ENCODE measurements at regions of chr1 and their contacts with region 1.

Region 1: DNA sequence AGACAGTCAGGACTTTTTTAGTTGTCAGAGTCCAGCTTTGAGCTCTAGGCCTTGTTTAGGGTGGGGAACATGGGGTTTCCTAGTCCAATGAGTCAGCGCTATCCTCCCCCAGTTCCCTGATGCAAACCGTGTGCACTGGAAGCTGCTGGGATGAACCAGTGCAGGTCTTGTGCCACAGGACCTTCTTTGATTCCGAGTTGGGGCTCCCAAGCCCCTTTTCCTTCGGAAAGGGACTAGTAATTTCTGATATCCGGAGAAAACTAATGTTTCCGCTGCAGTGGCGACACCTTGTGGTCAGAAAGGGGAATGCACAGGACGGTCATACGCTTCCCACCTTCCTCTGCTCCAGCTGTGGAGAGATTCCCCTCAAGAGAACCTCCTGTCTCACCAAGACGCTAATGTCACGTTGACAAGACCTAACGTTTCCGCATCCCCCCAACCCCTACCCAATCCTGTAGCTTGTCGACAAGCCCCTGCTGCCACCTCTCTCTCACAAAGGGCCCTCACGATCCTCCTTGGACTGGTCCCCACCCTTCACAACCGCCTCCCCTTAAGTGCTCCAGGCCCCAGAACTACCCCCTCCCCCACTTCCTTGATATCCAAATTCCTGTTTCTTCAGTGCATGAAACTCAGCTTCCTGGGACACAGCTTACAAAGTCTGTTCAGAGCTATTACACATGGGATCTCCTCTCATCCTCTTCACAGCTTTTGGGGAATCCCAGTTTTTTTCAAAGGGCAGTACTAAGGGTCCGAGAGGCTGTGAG is 30.9 kb downstream of the GPA33 start:
- DNase-seq: peak; percentile 88
- ATAC-seq: peak; percentile 73
- H3K4me3 Mint-ChIP-seq: peak overlapping the region; percentile 55
- H3K27ac Mint-ChIP-seq: no peak overlapping the region
- H3K4me1 Mint-ChIP-seq: peaks cover 17% of the 10 kb centered on the region
- H3K27me3 Mint-ChIP-seq: no peaks in the 10 kb centered on the region
- CTCF ChIP-seq: peak; percentile 98

Region 2: GRCh38 chr1:166875734-166876539 is 183.3 kb before region 1 on chr1 and contains the start of gene TADA1:
- CTCF ChIA-PET with region 1: interaction called, 23 read pairs
- POLR2A ChIA-PET with region 1: no interaction called
- DNase-seq: peak; percentile 99
- ATAC-seq: peak; percentile 92
- H3K4me3 Mint-ChIP-seq: peak within 1 kb of the TSS; percentile 94
- H3K27ac Mint-ChIP-seq: peak within 1 kb of the TSS; percentile 97
- H3K4me1 Mint-ChIP-seq: peaks cover 38% of the 10 kb centered on the region
- H3K27me3 Mint-ChIP-seq: peaks cover 2% of the 10 kb centered on the region; the same call in 1 of the 2 replicates
- CTCF ChIP-seq: no peak
- total RNA-seq, gene TADA1: 16.6 to 18.8 TPM (median 17.5 TPM) in 3 replicates

Region 3: GRCh38 chr1:166884040-166884642 is 175.1 kb before region 1 on chr1:
- CTCF ChIA-PET with region 1: interaction called, 104 read pairs
- POLR2A ChIA-PET with region 1: no interaction called
- DNase-seq: peak; percentile 91
- ATAC-seq: peak; percentile 99
- H3K4me3 Mint-ChIP-seq: peak overlapping the region; percentile 61
- H3K27ac Mint-ChIP-seq: no peak overlapping the region
- H3K4me1 Mint-ChIP-seq: peaks cover 8% of the 10 kb centered on the region
- H3K27me3 Mint-ChIP-seq: peaks cover 42% of the 10 kb centered on the region
- CTCF ChIP-seq: peak; percentile 70

Region 4: GRCh38 chr1:166920561-166921475 is 138.4 kb before region 1 on chr1:
- CTCF ChIA-PET with region 1: interaction called, 400 read pairs
- POLR2A ChIA-PET with region 1: no interaction called
- DNase-seq: peak; percentile 75
- ATAC-seq: peak; percentile 83
- H3K4me3 Mint-ChIP-seq: peak overlapping the region; percentile 71
- H3K27ac Mint-ChIP-seq: no peak overlapping the region
- H3K4me1 Mint-ChIP-seq: peaks cover 20% of the 10 kb centered on the region
- H3K27me3 Mint-ChIP-seq: peaks cover 59% of the 10 kb centered on the region
- CTCF ChIP-seq: no peak

Region 5: GRCh38 chr1:166999090-166999489 is 60.1 kb before region 1 on chr1:
- CTCF ChIA-PET with region 1: interaction called, 10 read pairs
- POLR2A ChIA-PET with region 1: no interaction called
- DNase-seq: no peak
- ATAC-seq: no peak
- H3K4me3 Mint-ChIP-seq: no peak overlapping the region
- H3K27ac Mint-ChIP-seq: no peak overlapping the region
- H3K4me1 Mint-ChIP-seq: peaks cover 9% of the 10 kb centered on the region
- H3K27me3 Mint-ChIP-seq: no peaks in the 10 kb centered on the region
- CTCF ChIP-seq: no peak

Region 6: GRCh38 chr1:167016100-167016750 is 43.0 kb before region 1 on chr1:
- CTCF ChIA-PET with region 1: no interaction called
- POLR2A ChIA-PET with region 1: no interaction called
- DNase-seq: no peak
- ATAC-seq: no peak
- H3K4me3 Mint-ChIP-seq: no peak overlapping the region
- H3K27ac Mint-ChIP-seq: no peak overlapping the region
- H3K4me1 Mint-ChIP-seq: peaks cover 2% of the 10 kb centered on the region
- H3K27me3 Mint-ChIP-seq: no peaks in the 10 kb centered on the region
- CTCF ChIP-seq: no peak